BJ (cell line): ENCODE measurements at regions of chr20 and their contacts with region 1.

Region 1: GRCh38 chr20:59495894-59496510 is 108.3 kb upstream of the PHACTR3 start:
- DNase-seq: no peak
- H3K4me3 ChIP-seq: no peak overlapping the region
- H3K27me3 ChIP-seq: no peaks in the 10 kb centered on the region; the same call in 1 of the 2 replicates
- CTCF ChIP-seq: peak; percentile 95

Region 2: DNA sequence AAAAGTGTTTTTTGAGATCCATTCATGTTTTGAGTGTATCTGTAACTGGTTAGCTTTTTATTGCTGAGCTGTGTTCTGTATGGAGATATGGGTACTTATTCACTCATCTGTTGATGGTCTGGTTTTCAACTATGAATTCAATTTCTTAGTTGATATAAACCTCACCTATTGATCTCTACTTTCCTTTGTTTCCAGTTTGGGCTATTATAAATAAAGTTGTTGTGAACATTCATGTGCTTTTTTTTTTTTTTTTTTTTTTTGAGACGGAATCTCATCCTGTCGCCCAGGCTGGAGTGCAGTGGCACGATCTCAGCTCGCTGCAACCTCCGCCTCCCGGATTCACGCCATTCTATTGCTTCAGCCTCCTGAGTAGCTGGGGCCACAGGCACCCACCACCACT is 21.4 kb before region 1 on chr20:
- CTCF ChIA-PET with region 1: interaction called, 16 read pairs
- POLR2A ChIA-PET with region 1: no interaction called
- DNase-seq: no peak
- H3K4me3 ChIP-seq: no peak overlapping the region
- H3K27me3 ChIP-seq: no peaks in the 10 kb centered on the region
- CTCF ChIP-seq: no peak

Region 3: GRCh38 chr20:59482351-59483187 is 13.4 kb before region 1 on chr20:
- CTCF ChIA-PET with region 1: interaction called, 16 read pairs
- POLR2A ChIA-PET with region 1: no interaction called
- DNase-seq: no peak
- H3K4me3 ChIP-seq: no peak overlapping the region
- H3K27me3 ChIP-seq: no peaks in the 10 kb centered on the region
- CTCF ChIP-seq: no peak

Region 4: GRCh38 chr20:59512651-59513050 is 16.6 kb after region 1 on chr20:
- CTCF ChIA-PET with region 1: interaction called, 21 read pairs
- POLR2A ChIA-PET with region 1: no interaction called
- DNase-seq: no peak
- H3K4me3 ChIP-seq: no peak overlapping the region
- H3K27me3 ChIP-seq: no peaks in the 10 kb centered on the region
- CTCF ChIP-seq: no peak

Region 5: DNA sequence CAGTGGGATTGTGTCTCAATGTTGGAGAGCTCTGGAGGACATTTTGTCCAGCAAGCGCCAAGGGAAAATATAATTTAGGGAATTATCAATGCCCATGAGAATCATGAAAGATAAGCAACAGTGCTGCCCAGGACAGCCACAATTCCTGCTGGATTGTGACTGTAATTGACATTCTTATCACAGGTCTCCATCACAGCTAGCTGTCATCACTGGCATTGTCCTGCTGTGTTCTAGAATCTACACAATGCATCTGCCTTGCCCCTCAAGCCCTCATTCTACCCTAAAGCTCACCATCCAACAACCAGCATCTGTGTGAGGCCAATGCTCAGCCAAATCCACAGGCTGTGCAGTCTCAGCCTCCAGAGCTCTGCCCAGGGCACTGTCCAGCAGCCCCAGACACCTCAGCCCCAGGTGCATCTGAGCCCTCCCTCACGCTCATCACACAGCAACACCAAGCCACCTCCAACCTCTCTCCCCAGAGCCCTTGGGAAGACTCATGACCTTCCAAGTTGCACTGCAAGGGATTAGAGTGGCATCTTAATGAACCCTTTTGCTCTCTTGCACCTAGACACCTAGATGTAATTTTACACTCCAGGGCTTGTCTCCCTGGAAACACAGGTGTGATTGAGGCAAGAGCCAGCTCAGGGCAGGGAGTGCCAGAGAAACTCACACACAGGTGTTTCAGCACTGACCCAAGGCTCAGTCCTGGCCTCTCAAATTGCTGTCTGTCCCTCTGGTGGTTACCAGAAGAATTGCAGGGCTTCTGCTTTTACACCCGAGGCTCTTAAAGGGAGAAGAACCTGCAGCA is 23.1 kb after region 1 on chr20:
- CTCF ChIA-PET with region 1: interaction called, 16 read pairs
- POLR2A ChIA-PET with region 1: no interaction called
- DNase-seq: no peak
- H3K4me3 ChIP-seq: no peak overlapping the region
- H3K27me3 ChIP-seq: no peaks in the 10 kb centered on the region
- CTCF ChIP-seq: peak; percentile 93

Region 6: GRCh38 chr20:59525500-59526241 is 29.7 kb after region 1 on chr20:
- CTCF ChIA-PET with region 1: interaction called, 10 read pairs
- POLR2A ChIA-PET with region 1: no interaction called
- DNase-seq: no peak
- H3K4me3 ChIP-seq: no peak overlapping the region
- H3K27me3 ChIP-seq: no peaks in the 10 kb centered on the region; the same call in 1 of the 2 replicates
- CTCF ChIP-seq: peak; percentile 91